PC-9 (cell line): ENCODE measurements at regions of chr7 and their contacts with region 1.

Region 1: DNA sequence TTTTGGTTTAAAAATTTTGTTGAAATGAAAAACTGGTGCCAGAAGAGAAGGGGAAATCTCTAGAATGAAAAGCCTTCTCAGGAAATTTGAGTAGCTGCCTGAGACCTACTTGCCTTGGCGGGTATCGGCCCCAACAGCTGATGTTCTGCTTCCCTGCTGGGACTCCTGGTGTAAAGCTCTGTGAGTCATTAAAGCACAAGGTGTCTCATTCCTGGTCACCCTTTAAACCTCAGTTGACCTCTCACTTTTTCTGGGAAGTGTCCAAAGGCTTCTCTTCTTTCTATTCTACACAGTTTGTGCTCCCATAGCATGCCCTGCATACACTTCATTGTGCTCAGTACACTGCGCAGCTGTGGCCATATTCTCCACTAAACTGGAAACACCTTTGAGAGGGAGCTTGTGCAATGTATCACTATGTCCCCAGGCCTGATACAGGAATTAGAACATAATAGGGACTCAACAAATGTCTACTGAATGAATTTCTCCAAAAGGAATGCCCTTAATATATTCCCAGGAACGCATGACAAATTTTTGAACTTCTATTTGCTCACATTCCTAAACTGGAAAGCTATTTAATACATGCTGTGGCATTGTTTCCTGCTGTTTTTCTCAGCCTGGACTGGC is 303.9 kb downstream of the SDHAF3 start:
- DNase-seq: no peak
- H3K4me3 ChIP-seq: no peak overlapping the region
- H3K27ac ChIP-seq: no peak overlapping the region
- H3K4me1 ChIP-seq: no peaks in the 10 kb centered on the region
- H3K27me3 ChIP-seq: peaks cover 8% of the 10 kb centered on the region; the same call in 1 of the 2 replicates
- CTCF ChIP-seq: no peak

Region 2: DNA sequence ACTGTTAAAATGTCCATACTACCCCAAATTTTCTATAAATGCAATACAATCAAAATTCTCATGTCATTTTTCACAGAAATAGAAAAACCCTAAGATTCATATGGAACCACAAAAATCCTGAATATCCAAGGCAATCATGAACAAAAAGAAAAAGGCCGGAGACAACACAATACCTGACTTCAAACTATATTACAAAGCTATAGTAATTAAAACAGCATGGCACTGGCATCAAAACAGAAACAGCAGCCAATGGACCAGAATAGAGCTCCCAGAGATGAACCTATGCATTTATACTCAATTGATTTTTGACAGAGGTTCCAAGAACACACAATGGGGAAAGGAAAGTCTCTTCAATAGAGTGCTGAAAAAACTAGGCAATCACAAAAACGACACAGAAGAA is 175.1 kb before region 1 on chr7:
- CTCF ChIA-PET with region 1: no interaction called
- POLR2A ChIA-PET with region 1: no interaction called
- intact Hi-C with region 1: no loop called
- DNase-seq: no peak
- H3K4me3 ChIP-seq: no peak overlapping the region
- H3K27ac ChIP-seq: no peak overlapping the region
- H3K4me1 ChIP-seq: no peaks in the 10 kb centered on the region
- H3K27me3 ChIP-seq: 0 out of 2 replicates have a peak, but pooled peaks cover 10% of the 10 kb centered on the region
- CTCF ChIP-seq: no peak

Region 3: GRCh38 chr7:97272237-97272975 is 149.0 kb before region 1 on chr7:
- CTCF ChIA-PET with region 1: interaction called, 13 read pairs
- POLR2A ChIA-PET with region 1: no interaction called
- intact Hi-C with region 1: no loop called
- DNase-seq: no peak
- H3K4me3 ChIP-seq: no peak overlapping the region
- H3K27ac ChIP-seq: no peak overlapping the region
- H3K4me1 ChIP-seq: no peaks in the 10 kb centered on the region
- H3K27me3 ChIP-seq: peaks cover 10% of the 10 kb centered on the region; the same call in 1 of the 2 replicates
- CTCF ChIP-seq: no peak

Region 4: GRCh38 chr7:97439637-97440214 is 18.3 kb after region 1 on chr7:
- CTCF ChIA-PET with region 1: no interaction called
- POLR2A ChIA-PET with region 1: no interaction called
- intact Hi-C with region 1: no loop called
- DNase-seq: no peak
- H3K4me3 ChIP-seq: no peak overlapping the region
- H3K27ac ChIP-seq: no peak overlapping the region
- H3K4me1 ChIP-seq: no peaks in the 10 kb centered on the region
- H3K27me3 ChIP-seq: 0 out of 2 replicates have a peak, but pooled peaks cover 7% of the 10 kb centered on the region
- CTCF ChIP-seq: no peak